CD8-positive, alpha-beta T cell (primary cell): ENCODE measurements at regions of chr14 and their contacts with region 1.

Region 1: DNA sequence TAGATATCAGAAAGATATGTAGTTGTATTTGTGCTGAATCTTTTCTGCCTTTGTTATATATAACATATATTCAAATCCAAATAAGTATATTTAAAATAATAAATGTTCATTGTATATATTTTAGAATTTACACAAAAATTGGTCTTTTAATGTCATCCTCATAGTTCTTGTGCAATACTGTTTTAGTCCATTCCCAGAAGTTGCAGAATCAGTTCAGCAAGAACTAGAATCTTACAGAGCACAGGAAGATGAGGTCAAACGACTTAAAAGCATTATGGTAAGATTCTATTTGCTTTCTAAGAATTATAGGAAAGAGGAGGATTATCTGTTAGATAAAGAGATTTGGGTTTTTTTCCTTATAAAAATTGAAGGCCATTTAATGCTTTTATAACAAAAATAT is 51.0 kb downstream of the SCFD1 start:
- DNase-seq: no peak
- ATAC-seq: no peak
- H3K4me3 ChIP-seq: no peak overlapping the region
- H3K4me3 Mint-ChIP-seq: no peak overlapping the region
- H3K27ac ChIP-seq: no peak overlapping the region
- H3K27ac Mint-ChIP-seq: no peak overlapping the region
- H3K4me1 ChIP-seq: no peaks in the 10 kb centered on the region
- H3K4me1 Mint-ChIP-seq: peaks cover 7% of the 10 kb centered on the region
- H3K27me3 ChIP-seq: no peaks in the 10 kb centered on the region
- H3K27me3 Mint-ChIP-seq: no peaks in the 10 kb centered on the region
- CTCF ChIP-seq: no peak

Region 2: GRCh38 chr14:30706704-30707103 is 33.6 kb after region 1 on chr14:
- CTCF ChIA-PET with region 1: no interaction called
- POLR2A ChIA-PET with region 1: no interaction called
- intact Hi-C with region 1: loop called in 1 of 2 experiments (anchors 1 kb)
- DNase-seq: no peak
- ATAC-seq: no peak
- H3K4me3 ChIP-seq: no peak overlapping the region
- H3K4me3 Mint-ChIP-seq: no peak overlapping the region
- H3K27ac ChIP-seq: no peak overlapping the region
- H3K27ac Mint-ChIP-seq: no peak overlapping the region
- H3K4me1 ChIP-seq: no peaks in the 10 kb centered on the region
- H3K4me1 Mint-ChIP-seq: no peaks in the 10 kb centered on the region
- H3K27me3 ChIP-seq: no peaks in the 10 kb centered on the region
- H3K27me3 Mint-ChIP-seq: no peaks in the 10 kb centered on the region
- CTCF ChIP-seq: no peak